ENCODE measurements at regions of chr3 and their contacts with region 1.

Region 1: GRCh38 chr3:124995460-124995994 is 60.3 kb downstream of the HEG1 start:
- DNase-seq: peak; percentile 21
- ATAC-seq: peak; percentile 85
- H3K4me3 Mint-ChIP-seq: no peak overlapping the region
- H3K27ac Mint-ChIP-seq: no peak overlapping the region
- H3K4me1 Mint-ChIP-seq: peaks cover 5% of the 10 kb centered on the region
- H3K27me3 Mint-ChIP-seq: no peaks in the 10 kb centered on the region
- CTCF ChIP-seq: no peak

Region 2: GRCh38 chr3:124928333-124929202 is 67.0 kb before region 1 on chr3:
- CTCF ChIA-PET with region 1: no interaction called
- POLR2A ChIA-PET with region 1: no interaction called
- intact Hi-C with region 1: loop called (anchors 5 kb)
- DNase-seq: no peak
- ATAC-seq: no peak
- H3K4me3 Mint-ChIP-seq: no peak overlapping the region
- H3K27ac Mint-ChIP-seq: no peak overlapping the region
- H3K4me1 Mint-ChIP-seq: no peaks in the 10 kb centered on the region
- H3K27me3 Mint-ChIP-seq: peaks cover 10% of the 10 kb centered on the region
- CTCF ChIP-seq: no peak

Region 3: DNA sequence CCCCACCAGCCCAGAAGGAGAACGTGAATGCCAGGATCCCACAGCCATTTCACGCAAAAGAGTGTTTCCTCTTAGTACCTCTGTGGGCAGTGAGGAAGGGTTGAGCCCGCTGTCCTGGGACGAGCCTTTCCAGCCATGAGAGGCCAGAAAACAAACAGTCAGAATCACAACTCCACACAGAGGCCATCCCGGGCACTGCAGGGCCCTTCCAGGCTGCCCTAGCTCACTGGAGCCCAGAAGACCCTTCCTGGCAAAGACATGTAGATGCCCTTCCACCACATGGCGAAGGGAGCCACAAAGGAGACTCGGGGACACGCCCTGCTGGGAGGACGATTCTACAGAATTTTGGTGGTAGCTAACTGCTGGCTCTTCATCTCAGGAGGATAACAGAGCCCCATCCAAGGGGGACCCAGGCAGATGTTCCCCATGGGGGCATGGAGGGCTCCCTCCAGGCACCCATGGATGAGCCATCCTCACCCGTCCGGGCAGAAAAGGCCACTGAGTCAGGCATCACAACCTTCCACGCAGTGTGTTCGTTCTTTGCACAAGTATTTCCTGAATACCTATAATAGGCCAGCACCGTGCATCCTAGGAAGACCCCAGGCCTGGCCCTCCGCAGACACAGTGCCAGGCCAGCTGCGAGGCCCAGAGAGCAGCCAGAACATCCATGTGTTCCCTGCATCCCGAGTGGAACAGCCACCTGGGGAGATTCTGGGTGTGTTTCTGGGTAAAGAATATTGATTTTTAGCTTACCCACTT is 169.8 kb after region 1 on chr3:
- CTCF ChIA-PET with region 1: interaction called, 3 read pairs
- POLR2A ChIA-PET with region 1: no interaction called
- intact Hi-C with region 1: loop called (anchors 1 kb)
- DNase-seq: no peak
- ATAC-seq: no peak
- H3K4me3 Mint-ChIP-seq: no peak overlapping the region
- H3K27ac Mint-ChIP-seq: no peak overlapping the region
- H3K4me1 Mint-ChIP-seq: peaks cover 6% of the 10 kb centered on the region
- H3K27me3 Mint-ChIP-seq: peaks cover 3% of the 10 kb centered on the region
- CTCF ChIP-seq: no peak

Region 4: GRCh38 chr3:125186261-125186787 is 190.8 kb after region 1 on chr3:
- CTCF ChIA-PET with region 1: no interaction called
- POLR2A ChIA-PET with region 1: no interaction called
- intact Hi-C with region 1: no loop called
- DNase-seq: no peak
- ATAC-seq: no peak
- H3K4me3 Mint-ChIP-seq: no peak overlapping the region
- H3K27ac Mint-ChIP-seq: no peak overlapping the region
- H3K4me1 Mint-ChIP-seq: peaks cover 3% of the 10 kb centered on the region
- H3K27me3 Mint-ChIP-seq: no peaks in the 10 kb centered on the region
- CTCF ChIP-seq: no peak

Region 5: GRCh38 chr3:125271127-125271526 is 275.6 kb after region 1 on chr3:
- CTCF ChIA-PET with region 1: no interaction called
- POLR2A ChIA-PET with region 1: no interaction called
- intact Hi-C with region 1: loop called (anchors 10 kb)
- DNase-seq: no peak
- ATAC-seq: no peak
- H3K4me3 Mint-ChIP-seq: no peak overlapping the region
- H3K27ac Mint-ChIP-seq: no peak overlapping the region
- H3K4me1 Mint-ChIP-seq: peaks cover 3% of the 10 kb centered on the region
- H3K27me3 Mint-ChIP-seq: no peaks in the 10 kb centered on the region
- CTCF ChIP-seq: no peak

Region 6: DNA sequence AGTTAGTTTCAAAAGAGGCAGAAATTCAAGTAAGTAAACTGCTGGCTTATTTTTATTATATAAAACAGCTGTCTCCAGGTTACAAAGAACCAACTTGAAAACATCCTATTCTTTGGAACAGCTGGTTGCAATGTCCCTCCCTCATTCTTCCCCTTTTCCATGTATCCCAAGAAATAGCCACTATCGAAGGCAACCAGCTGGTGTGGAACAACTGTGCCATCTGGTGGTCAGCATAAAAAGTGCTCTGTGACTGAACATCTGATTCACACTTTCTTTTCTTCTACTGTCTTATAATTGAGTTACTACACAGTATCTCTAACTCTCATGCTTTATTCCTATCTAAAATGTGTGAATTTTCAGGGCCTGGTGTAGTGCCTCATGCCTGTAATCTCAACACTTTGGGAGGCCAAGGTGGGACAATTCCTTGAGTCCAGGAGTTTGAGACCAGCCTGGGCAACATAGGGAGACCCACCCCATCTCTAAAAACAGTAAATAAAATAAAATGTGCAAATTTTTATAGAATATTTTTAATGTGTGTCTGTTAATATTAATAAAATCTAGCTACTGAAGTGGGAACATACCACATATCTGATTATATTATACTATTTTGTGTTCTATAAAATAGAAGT is 590.2 kb after region 1 on chr3:
- CTCF ChIA-PET with region 1: interaction called, 9 read pairs
- POLR2A ChIA-PET with region 1: no interaction called
- intact Hi-C with region 1: loop called (anchors 1 kb)
- DNase-seq: no peak
- ATAC-seq: no peak
- H3K4me3 Mint-ChIP-seq: no peak overlapping the region
- H3K27ac Mint-ChIP-seq: no peak overlapping the region
- H3K4me1 Mint-ChIP-seq: peaks cover 34% of the 10 kb centered on the region
- H3K27me3 Mint-ChIP-seq: no peaks in the 10 kb centered on the region
- CTCF ChIP-seq: peak; percentile 59